AG04449 (cell line): ENCODE measurements at regions of chr12 and their contacts with region 1.

Region 1: DNA sequence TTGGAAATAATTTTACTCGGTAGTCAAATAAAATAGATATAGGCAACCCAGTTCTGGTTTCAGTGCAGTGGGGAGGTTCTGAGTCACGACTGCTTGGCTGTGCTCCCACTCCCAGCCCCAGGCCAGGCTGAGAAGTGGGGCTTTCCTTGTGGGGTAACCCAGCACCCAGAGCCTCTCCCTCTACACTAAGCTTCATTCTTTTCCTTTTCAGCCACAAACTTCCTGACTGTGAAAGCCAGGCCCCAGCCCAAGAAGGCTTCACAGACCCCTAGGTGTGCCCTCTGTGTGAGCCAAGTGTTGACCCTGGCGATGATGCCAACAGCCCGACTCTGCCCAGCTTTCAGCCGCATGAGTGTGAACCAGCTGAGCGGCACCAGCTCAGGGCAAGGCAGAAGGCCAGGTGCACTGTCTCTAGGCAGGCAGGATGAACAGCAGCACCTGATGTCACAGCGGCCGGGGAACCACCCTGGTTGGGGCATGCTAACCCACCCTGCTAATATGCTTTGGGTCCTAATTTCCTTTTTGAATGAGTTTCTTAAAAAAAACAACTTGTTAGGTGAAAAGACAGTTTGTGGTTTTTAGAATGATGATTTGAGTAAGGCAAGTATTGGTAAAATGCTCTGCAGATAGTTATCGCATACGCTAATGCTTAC is 42.2 kb upstream of the ATP23 start:
- DNase-seq: no peak
- H3K4me3 ChIP-seq: no peak overlapping the region
- CTCF ChIP-seq: no peak

Region 2: DNA sequence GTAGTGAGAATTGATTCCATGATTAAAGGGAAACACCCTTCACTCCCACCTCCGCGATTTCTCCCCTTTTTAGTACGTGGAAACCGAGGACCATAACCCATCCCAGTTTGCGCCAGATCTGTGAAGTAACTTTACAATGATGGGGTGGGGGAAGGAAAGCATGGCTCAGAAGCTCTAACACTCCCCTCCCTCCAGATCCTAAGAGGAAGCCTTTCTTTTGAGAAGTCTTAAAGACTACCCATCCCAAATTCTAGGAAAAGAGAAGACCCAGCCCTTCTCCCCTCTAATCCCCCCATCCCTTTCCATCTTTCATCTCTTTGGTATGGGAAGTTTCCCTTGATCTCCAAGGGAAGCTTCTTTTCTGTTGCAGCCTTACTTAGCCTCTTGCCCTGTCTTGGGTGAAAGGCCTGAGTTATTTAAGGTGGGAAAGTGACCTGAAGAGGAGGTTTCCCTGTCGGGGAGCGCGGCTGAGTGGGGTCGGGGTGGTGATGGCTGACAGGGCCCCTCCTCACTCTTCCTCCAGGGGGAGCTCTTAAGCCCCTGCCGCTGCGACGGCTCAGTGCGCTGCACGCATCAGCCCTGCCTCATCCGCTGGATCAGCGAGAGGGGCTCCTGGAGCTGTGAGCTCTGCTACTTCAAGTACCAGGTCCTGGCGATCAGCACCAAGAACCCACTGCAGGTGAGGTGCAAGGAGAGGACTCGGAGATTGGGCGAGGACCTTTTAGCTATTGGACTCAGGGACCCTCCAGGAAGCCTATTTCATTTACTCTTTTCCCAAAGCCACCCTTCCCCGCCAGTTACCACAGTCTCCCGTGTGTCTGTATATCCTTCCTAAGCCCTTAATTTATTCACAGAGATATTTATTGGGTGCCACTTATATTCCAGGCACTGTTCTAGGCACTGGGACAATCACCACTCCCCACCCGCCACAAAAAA is 142.5 kb before region 1 on chr12:
- CTCF ChIA-PET with region 1: interaction called, 24 read pairs
- POLR2A ChIA-PET with region 1: interaction called, 3 read pairs
- DNase-seq: no peak
- H3K4me3 ChIP-seq: peak overlapping the region; percentile 56; the same call in 1 of the 2 replicates
- CTCF ChIP-seq: peak; percentile 83

Region 3: DNA sequence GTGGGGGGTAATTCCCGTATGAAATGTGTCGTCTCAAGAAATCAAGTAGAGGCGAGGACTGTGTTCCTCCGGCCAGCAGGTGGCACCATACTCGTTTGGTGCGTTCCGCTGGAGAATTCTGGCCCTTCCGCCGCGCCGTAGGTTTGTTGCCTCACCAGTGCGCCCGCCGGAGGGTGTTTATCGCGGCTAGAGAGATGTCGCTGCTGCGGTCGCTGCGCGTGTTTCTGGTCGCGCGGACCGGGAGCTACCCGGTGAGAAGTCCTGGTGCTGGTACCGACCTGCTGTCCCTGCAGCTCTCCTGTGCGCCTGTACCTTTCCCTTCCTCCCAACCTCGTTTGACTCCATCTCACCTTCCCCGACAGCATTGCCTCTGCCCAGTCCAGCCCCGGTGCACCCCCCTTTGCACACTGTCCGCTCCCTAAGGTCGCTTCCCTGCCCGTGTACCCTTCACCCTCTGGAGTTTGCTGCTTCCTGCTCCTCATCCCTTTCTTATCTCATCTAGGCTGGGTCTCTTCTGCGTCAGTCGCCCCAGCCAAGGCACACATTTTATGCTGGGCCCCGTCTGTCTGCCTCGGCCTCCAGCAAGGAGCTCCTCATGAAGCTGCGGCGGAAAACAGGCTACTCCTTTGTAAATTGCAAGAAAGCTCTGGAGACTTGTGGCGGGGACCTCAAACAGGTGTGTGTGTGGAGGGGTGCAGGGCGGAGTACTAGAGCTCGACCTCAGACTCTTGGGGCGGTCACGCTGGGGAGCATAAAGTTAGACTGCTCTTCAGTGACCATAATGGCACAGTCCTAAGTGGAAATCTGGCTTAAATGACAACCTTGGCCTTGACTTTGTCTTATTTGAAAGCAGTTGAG is 116.3 kb before region 1 on chr12 and contains the start of gene TSFM:
- CTCF ChIA-PET with region 1: interaction called, 60 read pairs
- POLR2A ChIA-PET with region 1: no interaction called
- DNase-seq: peak; percentile 69
- H3K4me3 ChIP-seq: peak within 1 kb of the TSS; percentile 94
- CTCF ChIP-seq: peak; percentile 95

Region 4: DNA sequence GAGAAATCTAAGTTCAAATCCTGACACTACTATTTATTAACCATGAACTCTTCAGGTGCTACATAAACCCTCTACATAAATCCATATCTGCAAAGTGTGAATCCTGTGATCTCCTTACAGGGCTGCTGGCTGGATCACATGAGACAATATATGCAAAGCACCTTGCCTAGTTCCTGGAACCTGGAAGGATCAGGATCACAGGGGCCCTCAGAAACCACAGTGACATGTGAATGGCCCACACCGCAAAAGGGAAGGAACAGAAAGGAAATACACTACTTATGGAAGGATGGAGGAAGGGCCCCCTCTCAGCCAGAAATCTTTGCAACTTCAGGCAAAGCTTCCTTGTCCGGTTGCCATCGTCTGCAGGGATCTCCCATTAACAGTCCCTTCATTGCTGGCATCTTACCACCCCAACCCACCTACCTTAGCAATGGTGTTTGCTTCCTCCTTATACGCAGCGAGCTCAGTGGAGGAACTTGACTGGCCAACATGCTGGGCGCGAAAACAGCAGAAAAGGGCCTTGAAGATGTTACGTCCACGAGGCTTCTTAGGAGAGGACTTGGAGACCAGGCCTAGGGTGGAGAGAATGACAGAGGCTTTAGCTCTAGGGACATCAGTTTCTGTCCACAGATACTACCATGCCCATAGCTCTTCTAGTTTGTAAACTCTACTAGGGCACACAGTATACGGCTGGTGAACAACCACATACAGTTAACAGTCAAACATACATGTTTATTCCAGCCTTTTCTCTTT is 69.9 kb before region 1 on chr12:
- CTCF ChIA-PET with region 1: interaction called, 484 read pairs
- POLR2A ChIA-PET with region 1: interaction called, 8 read pairs
- DNase-seq: no peak
- H3K4me3 ChIP-seq: no peak overlapping the region
- CTCF ChIP-seq: no peak

Region 5: DNA sequence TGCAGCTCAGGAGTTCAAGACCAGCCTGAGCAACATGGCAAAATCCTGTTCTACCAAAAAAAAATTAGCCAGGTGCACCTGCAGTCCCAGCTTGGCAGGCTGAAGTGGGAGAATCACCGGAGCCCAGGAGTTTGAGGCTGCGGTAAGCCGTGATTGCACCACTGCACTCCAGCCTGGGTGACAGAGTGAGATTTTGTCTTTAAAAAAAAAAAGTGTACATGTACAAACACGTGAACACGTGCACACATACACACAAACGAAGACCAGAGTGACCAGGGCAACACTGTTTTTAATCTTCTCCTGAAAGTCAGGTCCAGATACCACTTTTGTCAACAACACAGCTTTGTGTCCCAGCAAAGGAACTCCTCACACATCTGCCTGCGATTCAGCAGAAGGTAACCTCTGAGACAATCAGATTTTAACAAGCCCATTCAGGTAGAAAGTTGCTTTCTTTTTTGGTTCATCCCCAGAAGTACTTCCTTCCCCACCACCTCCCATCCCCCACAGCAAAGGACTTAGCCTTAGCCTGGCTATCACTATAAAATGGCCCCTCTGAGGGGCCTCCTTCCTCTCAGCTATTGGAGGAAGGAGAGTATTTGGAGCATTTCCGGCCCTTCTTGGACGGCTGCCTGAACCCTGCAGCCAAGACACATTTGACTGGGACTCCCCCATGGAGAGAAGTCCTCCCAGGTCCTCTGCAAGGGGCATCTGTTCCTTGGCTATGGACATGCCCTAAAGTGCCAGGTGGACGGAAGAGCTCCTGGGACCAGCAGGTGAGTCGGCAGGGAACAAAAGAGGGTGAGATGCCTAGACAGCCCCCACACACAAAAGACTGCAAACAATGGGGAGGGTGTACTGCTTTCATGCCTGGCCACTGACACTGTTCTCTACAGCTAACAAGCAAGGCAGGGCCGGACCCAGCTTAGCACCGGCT is 62.4 kb before region 1 on chr12:
- CTCF ChIA-PET with region 1: interaction called, 484 read pairs
- POLR2A ChIA-PET with region 1: interaction called, 15 read pairs
- DNase-seq: peak; percentile 60
- H3K4me3 ChIP-seq: peak overlapping the region; percentile 40
- CTCF ChIP-seq: no peak

Region 6: DNA sequence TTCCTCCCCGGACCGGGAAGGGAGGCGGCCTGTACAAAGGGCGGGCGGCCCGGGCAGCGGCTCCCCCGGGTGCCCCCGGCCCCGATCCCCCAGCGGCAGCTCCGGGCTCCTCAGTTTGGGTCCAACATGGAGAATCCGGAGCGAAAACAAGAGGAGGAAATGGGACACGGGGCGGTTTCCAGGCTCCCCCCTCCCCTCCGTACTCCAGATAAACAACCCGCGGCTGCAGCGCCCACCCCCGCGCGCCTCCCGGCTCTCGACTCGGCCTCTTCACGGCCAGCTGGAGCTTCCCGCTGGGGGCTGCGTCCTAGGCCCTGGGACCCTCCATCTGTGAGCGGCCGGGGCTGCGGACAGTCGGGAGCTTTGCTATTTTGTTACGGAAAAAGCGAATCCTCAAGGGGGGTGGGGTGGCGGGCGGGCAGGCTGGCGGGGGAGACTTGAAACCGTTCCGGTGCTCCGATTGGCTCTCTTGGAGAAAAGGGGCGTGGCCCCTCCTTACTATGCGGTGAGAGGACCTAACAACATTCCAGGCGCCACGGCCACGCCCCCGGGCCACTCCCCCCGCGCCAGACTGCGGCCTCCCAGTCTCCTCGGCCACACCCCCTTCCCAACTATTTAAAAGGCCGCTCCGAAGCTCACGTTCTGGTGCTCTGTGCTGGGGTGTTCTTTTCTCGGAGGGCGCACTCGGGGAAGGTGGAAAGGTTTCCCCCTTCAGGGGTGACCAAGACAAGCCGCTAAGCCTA is 52.4 kb before region 1 on chr12 and contains the start of gene CTDSP2:
- CTCF ChIA-PET with region 1: interaction called, 484 read pairs
- POLR2A ChIA-PET with region 1: interaction called, 82 read pairs
- DNase-seq: peak; percentile 85
- H3K4me3 ChIP-seq: peak within 1 kb of the TSS; percentile 99
- CTCF ChIP-seq: no peak

Region 7: GRCh38 chr12:57865090-57865751 is 33.9 kb before region 1 on chr12:
- CTCF ChIA-PET with region 1: interaction called, 25 read pairs
- POLR2A ChIA-PET with region 1: interaction called, 21 read pairs
- DNase-seq: no peak
- H3K4me3 ChIP-seq: peak overlapping the region; percentile 52
- CTCF ChIP-seq: no peak

Region 8: DNA sequence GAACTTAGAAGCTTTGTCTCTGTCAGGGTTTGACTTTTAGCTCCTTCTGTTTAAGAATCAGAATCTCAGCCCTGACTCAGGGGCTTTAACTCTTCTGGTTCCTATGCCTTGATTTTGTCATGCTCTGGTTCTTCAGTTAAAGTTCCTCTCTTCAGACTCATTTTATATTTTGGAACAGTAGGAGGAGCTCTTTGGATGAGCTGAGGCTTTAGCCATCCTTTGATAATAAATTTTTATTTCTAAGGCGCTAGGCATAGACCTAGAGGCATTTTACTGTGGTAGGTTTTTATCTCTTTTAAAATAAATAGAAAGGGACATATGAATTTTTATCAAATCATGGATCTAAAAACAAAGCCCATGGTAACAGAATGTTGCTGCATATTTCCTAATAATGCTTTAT is 93.9 kb after region 1 on chr12:
- CTCF ChIA-PET with region 1: no interaction called
- POLR2A ChIA-PET with region 1: no interaction called
- DNase-seq: no peak
- H3K4me3 ChIP-seq: no peak overlapping the region
- CTCF ChIP-seq: peak; percentile 0

Region 9: GRCh38 chr12:58557171-58557570 is 658.0 kb after region 1 on chr12:
- CTCF ChIA-PET with region 1: no interaction called
- POLR2A ChIA-PET with region 1: no interaction called
- DNase-seq: peak; percentile 71
- H3K4me3 ChIP-seq: no peak overlapping the region
- CTCF ChIP-seq: no peak